Activated T-helper 1 cell treated with anti-CD3 and anti-CD28 coated beads, Interleukin-12 subunit alpha, Interleukin-12 subunit beta, Interleukin-2, Interleukin-4 antibody, amounts not matched to agents 30 ng/mL and 10 ng/mL and 1 ng/mL, durations not matched to agents 14 hours and 24 hours and 36 hours (primary cell): ENCODE measurements at regions of chr16 and their contacts with region 1.

Region 1: GRCh38 chr16:31354394-31355291 is at the start of gene ITGAX:
- DNase-seq: peak; percentile 76
- H3K4me3 Mint-ChIP-seq: peak within 1 kb of the TSS; percentile 84
- H3K27ac Mint-ChIP-seq: peak within 1 kb of the TSS; percentile 99
- H3K4me1 Mint-ChIP-seq: peaks cover 69% of the 10 kb centered on the region
- H3K27me3 Mint-ChIP-seq: no peaks in the 10 kb centered on the region
- total RNA-seq, gene ITGAX: 63.8 and 65.0 TPM in 2 replicates

Region 2: DNA sequence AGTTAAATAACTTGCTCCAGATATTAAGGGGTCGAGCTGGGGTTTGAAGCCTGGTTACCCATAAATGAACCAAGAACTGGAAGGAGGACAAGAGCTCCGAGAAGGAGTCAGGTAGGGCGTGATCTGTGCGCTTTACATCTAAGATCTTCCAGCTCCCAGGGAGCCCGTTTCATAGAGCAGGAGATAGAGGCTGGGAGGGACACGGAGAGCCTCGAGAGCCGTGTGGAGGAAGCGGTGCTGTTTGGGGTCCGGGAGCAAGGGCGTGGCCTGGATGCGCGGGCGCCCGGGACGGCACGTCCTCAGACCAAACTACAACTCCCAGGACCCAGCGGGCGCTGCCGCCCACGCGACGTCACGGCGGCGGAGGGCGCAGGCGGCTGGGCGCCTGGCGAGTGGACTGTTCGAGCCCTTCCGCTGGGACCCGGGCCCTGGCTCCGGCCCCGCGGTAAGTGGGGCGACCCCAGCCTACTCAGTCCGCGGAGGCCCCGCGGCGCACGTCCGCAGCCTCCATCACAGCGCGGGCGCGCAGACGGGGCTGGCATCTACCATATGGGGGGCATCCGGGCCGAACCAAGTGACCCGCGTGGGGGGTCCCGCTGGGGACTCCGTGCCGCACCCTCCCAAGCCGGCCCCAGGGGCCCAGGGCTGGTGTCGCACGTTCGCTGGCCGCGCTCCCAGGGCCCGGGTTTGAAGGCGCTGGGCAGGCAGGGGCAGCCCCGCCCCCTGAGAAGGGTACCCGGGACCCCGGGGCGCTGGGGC is 246.4 kb before region 1 on chr16 and contains the start of gene BCKDK:
- intact Hi-C with region 1: loop called (anchors 5 kb)
- DNase-seq: peak; percentile 69
- H3K4me3 Mint-ChIP-seq: peak within 1 kb of the TSS; percentile 84
- H3K27ac Mint-ChIP-seq: peak within 1 kb of the TSS; percentile 86
- H3K4me1 Mint-ChIP-seq: peaks cover 22% of the 10 kb centered on the region
- H3K27me3 Mint-ChIP-seq: no peaks in the 10 kb centered on the region
- total RNA-seq, gene BCKDK: 43.6 and 44.8 TPM in 2 replicates

Region 3: GRCh38 chr16:31253642-31254045 is 101.0 kb before region 1 on chr16:
- intact Hi-C with region 1: loop called (anchors 5 kb)
- DNase-seq: peak; percentile 50
- H3K4me3 Mint-ChIP-seq: peak overlapping the region; percentile 82
- H3K27ac Mint-ChIP-seq: peak overlapping the region; percentile 96
- H3K4me1 Mint-ChIP-seq: peaks cover 45% of the 10 kb centered on the region
- H3K27me3 Mint-ChIP-seq: no peaks in the 10 kb centered on the region

Region 4: DNA sequence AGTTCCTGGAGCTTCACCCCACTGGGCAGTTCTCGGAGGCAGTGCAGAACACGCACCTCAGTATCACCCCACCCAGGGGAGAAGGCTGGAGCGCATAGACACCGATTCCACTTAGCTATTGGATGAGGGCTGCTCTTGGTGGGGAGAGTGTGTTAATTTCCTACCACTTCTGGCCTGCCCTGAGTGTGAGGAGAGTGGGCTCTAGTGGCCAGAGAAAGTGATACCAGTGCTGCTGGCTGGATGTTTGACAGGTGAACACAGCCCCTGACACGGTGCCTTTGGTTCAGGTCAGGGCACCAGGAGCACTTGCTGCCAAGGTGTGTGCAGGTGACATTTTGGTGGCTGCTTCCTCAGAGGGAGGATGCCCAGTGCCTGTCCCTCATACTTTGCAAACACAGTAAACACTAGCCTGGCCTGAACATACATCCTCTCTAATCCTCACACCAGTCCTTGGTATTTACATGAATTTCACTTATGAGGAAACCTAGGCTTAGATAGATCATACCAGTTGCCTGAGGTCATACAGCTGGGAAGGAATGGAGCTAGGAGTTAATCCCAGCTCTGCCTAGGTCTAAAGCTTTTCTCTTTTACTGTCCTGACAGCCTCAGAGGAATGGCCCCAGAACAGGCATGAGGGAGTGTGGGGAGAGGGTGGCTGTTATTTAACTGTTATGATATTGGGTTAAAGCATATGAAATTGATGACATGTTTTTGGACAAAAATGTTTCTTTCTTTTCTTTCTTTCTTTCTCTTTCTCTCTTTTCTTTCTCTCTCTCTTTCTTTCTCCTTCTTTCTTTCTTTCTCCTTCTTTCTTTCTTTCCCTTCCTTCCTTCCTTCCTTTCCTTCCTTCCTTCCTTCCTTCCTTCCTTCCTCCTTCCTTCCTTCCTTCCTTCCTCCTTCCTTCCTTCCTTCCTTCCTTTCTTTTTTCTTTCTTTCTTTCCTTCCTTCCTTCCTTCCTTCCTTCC is 20.7 kb before region 1 on chr16:
- intact Hi-C with region 1: loop called (anchors 2 kb)
- DNase-seq: no peak
- H3K4me3 Mint-ChIP-seq: no peak overlapping the region
- H3K27ac Mint-ChIP-seq: peak overlapping the region; percentile 40
- H3K4me1 Mint-ChIP-seq: peaks cover 45% of the 10 kb centered on the region
- H3K27me3 Mint-ChIP-seq: peaks cover 3% of the 10 kb centered on the region

Region 5: GRCh38 chr16:31421587-31421986 is 66.9 kb after region 1 on chr16:
- intact Hi-C with region 1: loop called (anchors 2 kb)
- DNase-seq: peak; percentile 69
- H3K4me3 Mint-ChIP-seq: peak overlapping the region; percentile 44
- H3K27ac Mint-ChIP-seq: peak overlapping the region; percentile 77
- H3K4me1 Mint-ChIP-seq: peaks cover 62% of the 10 kb centered on the region
- H3K27me3 Mint-ChIP-seq: peaks cover 2% of the 10 kb centered on the region